ENCODE measurements at regions of chr12 and their contacts with region 1.

Region 1: DNA sequence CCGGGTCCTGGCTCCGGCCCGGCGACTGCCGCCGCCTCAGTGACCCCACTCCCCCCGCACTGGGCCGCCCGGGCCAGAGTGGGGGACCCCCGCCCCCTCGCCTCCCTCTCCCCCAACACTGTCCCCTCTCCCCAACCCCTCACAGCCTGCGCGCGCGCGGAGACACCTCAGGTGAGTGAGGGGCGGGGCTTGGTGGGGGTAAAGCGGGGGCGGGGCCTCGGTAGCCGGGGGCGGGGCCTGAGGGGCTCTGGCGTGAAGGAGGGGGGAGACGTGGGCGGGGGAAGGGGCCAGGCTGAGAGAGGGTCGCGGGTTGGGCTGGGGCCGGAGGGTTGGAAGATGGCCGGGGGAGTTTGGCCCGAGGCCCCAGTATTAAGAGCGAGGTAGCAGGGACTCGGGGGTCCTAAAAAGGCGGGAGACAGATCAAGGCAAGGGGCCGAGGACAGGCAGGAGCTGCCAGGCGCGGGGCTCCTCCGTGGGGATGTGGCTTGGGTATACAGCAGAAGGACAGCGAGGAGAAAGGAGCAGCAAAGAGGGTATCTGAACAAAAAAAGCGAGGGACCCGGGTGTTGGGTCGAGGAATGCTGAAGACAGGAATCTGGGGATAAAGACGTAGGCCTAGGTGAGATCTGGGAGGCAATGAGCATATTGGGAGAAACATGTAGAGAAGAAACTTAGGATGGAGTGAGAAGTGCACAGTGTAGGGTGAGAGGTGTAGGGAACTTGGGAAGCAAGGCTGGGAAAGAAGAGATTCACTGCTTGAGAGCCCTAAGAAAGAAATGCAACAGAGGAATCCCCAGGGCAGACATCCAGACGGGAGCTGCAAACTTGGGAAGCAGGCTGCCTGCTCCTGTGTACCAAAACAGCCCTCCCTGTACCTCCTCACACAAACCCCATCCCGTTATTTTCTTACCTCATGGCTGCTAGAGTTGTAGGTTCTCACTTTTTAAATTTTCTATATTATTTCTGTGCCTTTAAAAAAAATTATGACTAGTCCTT is 10.8 kb downstream of the SUOX start:
- DNase-seq: peak; percentile 69
- ATAC-seq: peak; percentile 91
- H3K4me3 ChIP-seq: peak overlapping the region; percentile 31 to 81 (median 62)
- H3K4me3 Mint-ChIP-seq: peak overlapping the region; percentile 91
- H3K27ac ChIP-seq: peak overlapping the region; percentile 4 to 64
- H3K27ac Mint-ChIP-seq: peak overlapping the region; percentile 80
- H3K4me1 ChIP-seq: peaks cover 5 to 11% of the 10 kb centered on the region in 2 donors
- H3K4me1 Mint-ChIP-seq: peaks cover 14% of the 10 kb centered on the region
- H3K27me3 ChIP-seq: no peaks in the 10 kb centered on the region
- H3K27me3 Mint-ChIP-seq: no peaks in the 10 kb centered on the region
- CTCF ChIP-seq: no peak

Region 2: DNA sequence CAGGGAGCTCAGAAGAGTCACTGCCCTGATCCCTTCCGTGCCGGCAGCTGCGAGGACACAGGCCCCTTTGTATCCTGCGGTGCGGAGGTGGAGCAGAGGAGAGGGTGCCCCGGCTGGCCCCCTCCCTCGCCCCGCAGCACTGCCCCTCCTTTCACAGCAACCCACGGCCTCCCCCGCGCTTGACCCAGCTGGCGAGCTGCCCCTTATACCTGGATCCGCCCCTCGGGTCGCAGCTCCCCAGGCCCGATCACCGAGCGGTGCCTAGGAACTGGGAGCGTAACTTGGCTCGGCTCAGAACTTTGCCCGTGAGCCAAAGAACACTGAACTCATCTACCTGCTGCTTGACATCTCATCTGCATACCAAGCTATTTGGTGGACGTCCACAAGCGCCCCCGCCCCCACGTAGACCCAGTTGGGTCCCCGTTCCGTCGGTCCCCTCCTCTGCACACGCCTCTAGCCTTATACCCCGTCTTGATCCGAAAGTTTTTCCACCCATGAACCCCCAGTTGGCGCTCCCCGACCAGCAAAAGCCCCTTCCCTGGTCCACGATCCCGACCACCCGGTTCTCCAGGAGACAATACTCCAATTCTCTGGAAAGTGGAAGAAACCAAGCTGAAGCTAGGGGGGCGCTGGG is 177.8 kb before region 1 on chr12:
- CTCF ChIA-PET with region 1: no interaction called
- POLR2A ChIA-PET with region 1: no interaction called
- intact Hi-C with region 1: loop called (anchors 1 kb)
- DNase-seq: peak; percentile 65
- ATAC-seq: peak; percentile 4
- H3K4me3 ChIP-seq: peak overlapping the region; percentile 68 to 96 (median 84)
- H3K4me3 Mint-ChIP-seq: peak overlapping the region; percentile 99
- H3K27ac ChIP-seq: peak overlapping the region; percentile 57 to 60
- H3K27ac Mint-ChIP-seq: peak overlapping the region; percentile 97
- H3K4me1 ChIP-seq: peaks cover 36 to 49% of the 10 kb centered on the region in 2 donors
- H3K4me1 Mint-ChIP-seq: peaks cover 48% of the 10 kb centered on the region
- H3K27me3 ChIP-seq: no peaks in the 10 kb centered on the region
- H3K27me3 Mint-ChIP-seq: no peaks in the 10 kb centered on the region
- CTCF ChIP-seq: no peak

Region 3: DNA sequence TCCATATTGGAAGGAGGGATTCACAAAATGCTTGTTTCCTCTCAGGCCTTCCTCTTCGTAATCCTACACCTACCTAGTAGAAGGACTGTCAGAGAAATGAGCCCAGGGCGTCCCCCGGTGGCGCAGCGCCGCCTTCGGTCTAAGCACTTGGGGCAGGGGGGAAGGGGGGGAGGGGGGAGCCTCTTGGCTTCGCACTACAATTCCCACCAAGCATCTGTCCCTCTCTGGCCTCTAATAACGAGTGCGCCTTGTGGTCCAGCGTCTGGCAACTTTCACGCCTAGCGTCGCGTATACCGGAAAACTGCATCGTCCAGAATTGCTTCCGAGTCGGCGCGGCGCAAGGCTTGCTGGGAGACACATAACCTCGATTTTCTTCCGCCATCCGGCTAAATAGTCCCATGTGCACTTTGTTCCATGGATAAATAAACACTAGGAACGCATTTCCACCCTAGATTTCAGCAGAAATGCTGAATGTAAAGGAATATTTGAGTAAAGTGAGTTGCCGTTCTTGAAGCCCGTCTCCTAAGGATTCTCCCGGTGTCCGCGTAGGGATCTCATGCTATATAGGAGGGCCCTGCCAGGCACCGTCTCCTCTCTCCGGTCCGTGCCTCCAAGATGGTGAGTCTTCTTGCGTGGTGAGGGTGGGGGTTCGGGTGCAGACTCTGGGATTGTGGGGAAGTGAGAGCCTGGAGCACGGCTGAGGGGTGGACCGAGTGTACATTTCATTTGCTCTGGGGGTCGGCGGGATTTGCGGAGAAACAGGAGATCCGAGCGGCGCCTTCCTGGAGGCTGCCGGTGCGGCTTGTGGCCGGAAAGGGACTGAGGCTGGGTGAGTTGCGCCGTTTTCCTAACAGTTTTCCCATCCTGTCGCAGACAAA is 33.9 kb after region 1 on chr12 and contains the start of gene RPS26:
- CTCF ChIA-PET with region 1: interaction called, 4 read pairs
- POLR2A ChIA-PET with region 1: interaction called, 9 read pairs
- intact Hi-C with region 1: loop called (anchors 1 kb)
- DNase-seq: peak; percentile 99
- ATAC-seq: peak; percentile 93
- H3K4me3 ChIP-seq: peak within 1 kb of the TSS; percentile 70 to 99 (median 91)
- H3K4me3 Mint-ChIP-seq: peak within 1 kb of the TSS; percentile 98
- H3K27ac ChIP-seq: peak within 1 kb of the TSS; percentile 82 to 90
- H3K27ac Mint-ChIP-seq: peak within 1 kb of the TSS; percentile 97
- H3K4me1 ChIP-seq: peaks cover 19 to 21% of the 10 kb centered on the region in 2 donors
- H3K4me1 Mint-ChIP-seq: peaks cover 24% of the 10 kb centered on the region
- H3K27me3 ChIP-seq: no peaks in the 10 kb centered on the region
- H3K27me3 Mint-ChIP-seq: no peaks in the 10 kb centered on the region
- CTCF ChIP-seq: peak; percentile 67
- total RNA-seq, gene RPS26: 19.4 and 21.0 TPM in 2 replicates

Region 4: GRCh38 chr12:56366948-56367347 is 359.1 kb after region 1 on chr12:
- CTCF ChIA-PET with region 1: no interaction called
- POLR2A ChIA-PET with region 1: no interaction called
- intact Hi-C with region 1: no loop called
- DNase-seq: no peak
- ATAC-seq: no peak
- H3K4me3 ChIP-seq: no peak overlapping the region
- H3K4me3 Mint-ChIP-seq: no peak overlapping the region
- H3K27ac ChIP-seq: no peak overlapping the region
- H3K27ac Mint-ChIP-seq: no peak overlapping the region
- H3K4me1 ChIP-seq: no peaks in the 10 kb centered on the region
- H3K4me1 Mint-ChIP-seq: peaks cover 2% of the 10 kb centered on the region
- H3K27me3 ChIP-seq: no peaks in the 10 kb centered on the region
- H3K27me3 Mint-ChIP-seq: no peaks in the 10 kb centered on the region
- CTCF ChIP-seq: no peak

Measured in B cell (primary cell).